Aorta (tissue), 5 donors: ENCODE measurements at regions of chr12 and their contacts with region 1.

Region 1: GRCh38 chr12:34022079-34022830 is at the start of gene ALG10:
- DNase-seq: peak; percentile 98
- ATAC-seq: peak; percentile 99
- H3K4me3 ChIP-seq: peak within 1 kb of the TSS; percentile 57 to 79
- H3K27ac ChIP-seq: peak within 1 kb of the TSS; percentile 6 to 98
- H3K4me1 ChIP-seq: no peaks in the 10 kb centered on the region
- H3K27me3 ChIP-seq: no peaks in the 10 kb centered on the region
- total RNA-seq, gene ALG10: 5.4 to 6.5 TPM

Region 2: DNA sequence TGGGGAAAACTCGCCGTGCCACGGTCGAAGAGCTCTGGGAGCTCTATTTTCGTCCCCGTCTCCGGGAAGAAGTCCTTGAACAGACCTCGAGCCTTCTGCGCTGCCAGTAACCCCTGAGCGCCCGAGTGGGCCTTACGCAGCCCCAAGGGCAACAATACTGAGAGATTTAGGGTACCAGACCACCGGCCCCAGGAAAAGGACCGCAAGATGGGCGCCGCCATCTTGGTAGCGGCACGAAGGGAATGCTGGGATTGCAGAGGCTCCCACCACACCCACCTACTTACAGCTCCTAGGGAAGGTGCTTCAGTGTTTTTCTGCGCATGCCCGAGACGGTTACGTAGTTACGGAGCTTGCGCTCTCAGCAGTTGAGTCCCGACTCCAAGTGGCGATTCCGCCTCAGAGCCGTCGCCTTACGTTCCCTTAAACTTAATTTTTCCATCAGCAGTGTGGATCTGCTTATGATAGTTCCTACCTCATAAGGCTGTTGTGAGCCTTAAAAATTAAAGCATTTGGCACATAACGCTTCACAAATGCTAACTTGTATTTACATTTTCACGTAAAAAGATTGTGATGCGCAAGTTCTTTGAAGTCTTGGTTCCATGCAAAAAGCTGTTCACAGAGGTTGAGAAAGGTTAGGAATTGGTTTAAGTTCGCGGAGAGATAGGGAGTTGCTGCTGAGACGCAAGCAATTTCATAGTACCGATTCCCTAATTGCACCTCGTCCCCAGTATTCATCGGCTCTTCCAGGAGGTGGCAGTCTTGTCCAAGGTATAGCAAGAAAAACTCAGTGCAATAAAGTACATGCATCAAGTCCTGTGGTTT is 1266.4 kb before region 1 on chr12 and contains the start of gene YARS2:
- intact Hi-C with region 1: loop called (anchors 5 kb)
- DNase-seq: peak; percentile 97
- ATAC-seq: peak; percentile 99
- H3K4me3 ChIP-seq: peak within 1 kb of the TSS; percentile 77 to 79
- H3K27ac ChIP-seq: peak within 1 kb of the TSS; percentile 60 to 80
- H3K4me1 ChIP-seq: peaks cover 0 to 4% of the 10 kb centered on the region in 2 donors
- H3K27me3 ChIP-seq: no peaks in the 10 kb centered on the region
- total RNA-seq, gene YARS2: 7.0 to 11.5 TPM